Common myeloid progenitor, CD34-positive (primary cell): ENCODE measurements at regions of chr14 and their contacts with region 1.

Region 1: DNA sequence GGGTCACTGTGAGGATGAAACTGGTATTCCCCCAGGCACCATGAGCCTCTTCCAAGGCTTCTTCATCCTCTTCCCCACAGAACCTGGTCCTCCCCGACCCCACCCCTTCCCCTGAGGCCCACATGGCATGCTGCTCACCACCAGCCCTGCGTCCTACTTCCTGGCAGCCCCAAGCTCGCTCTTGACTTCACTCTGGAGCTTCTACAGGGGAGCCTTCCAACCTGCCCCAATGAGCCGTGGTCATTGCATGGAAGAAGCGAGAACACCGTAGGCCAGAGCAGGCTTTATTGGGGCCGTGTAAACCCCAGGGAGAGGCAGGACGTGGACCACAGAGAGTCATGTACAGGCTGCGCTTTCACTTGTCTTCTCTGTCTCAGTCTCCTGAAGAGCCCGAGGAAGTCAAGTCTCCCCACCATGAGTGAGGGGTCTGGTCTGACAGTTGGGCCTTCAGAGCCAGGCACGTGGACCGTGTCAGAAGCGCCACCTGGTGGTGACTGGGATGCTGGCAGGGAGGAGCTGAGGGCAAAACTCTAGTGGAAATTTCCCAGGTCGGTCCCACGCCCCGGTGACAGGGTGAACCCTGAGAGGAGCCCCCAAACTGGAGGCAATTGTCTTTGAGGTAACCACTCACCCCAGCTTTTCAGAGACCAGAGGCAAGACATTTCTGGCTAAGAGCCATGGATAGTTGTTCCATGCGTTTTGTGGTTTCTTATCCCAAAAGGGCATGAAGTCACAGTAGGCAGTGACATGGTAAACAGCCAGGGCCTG is 17.5 kb downstream of the RPS6KL1 start:
- DNase-seq: peak; percentile 66 to 78 (median 74)
- H3K4me3 ChIP-seq: no peak overlapping the region
- H3K27ac ChIP-seq: no peak overlapping the region
- H3K4me1 ChIP-seq: peaks cover 0 to 23% (median 17%) of the 10 kb centered on the region in 4 experiments
- H3K27me3 ChIP-seq: no peaks in the 10 kb centered on the region

Region 2: GRCh38 chr14:74712499-74713394 is 192.8 kb before region 1 on chr14 and contains the starts of genes AREL1 and FCF1:
- CTCF ChIA-PET with region 1: no interaction called
- POLR2A ChIA-PET with region 1: no interaction called
- DNase-seq: peak; percentile 93 to 94 (median 94)
- H3K4me3 ChIP-seq: peak within 1 kb of the TSS; percentile 82 to 99 (median 91)
- H3K27ac ChIP-seq: peak within 1 kb of the TSS; percentile 92 to 96
- H3K4me1 ChIP-seq: peaks cover 10 to 19% (median 18%) of the 10 kb centered on the region in 4 experiments
- H3K27me3 ChIP-seq: no peaks in the 10 kb centered on the region

Region 3: DNA sequence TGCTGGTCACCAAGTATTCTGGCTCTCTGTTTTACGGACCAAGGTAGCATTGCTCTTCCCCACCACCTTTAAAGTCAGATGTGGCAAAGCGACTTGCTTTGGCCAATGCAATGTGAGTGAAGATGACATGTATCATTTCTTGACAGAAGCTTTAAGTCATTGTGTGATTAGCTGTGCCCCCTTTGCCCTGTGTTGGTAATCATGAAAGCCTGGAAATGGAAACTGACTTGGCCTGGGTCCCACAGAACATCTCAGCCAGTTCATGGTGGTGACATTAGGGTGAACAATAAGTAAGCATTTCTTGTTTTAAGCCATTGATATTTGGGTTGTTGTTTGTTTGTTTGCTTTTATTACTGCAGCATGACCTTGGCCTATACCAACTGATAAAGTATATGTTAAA is 158.3 kb before region 1 on chr14:
- CTCF ChIA-PET with region 1: no interaction called
- POLR2A ChIA-PET with region 1: no interaction called
- DNase-seq: no peak
- H3K4me3 ChIP-seq: no peak overlapping the region
- H3K27ac ChIP-seq: no peak overlapping the region
- H3K4me1 ChIP-seq: no peaks in the 10 kb centered on the region
- H3K27me3 ChIP-seq: no peaks in the 10 kb centered on the region

Region 4: GRCh38 chr14:74867673-74868072 is 37.9 kb before region 1 on chr14:
- CTCF ChIA-PET with region 1: interaction called, 498 read pairs
- POLR2A ChIA-PET with region 1: interaction called, 8 read pairs
- DNase-seq: peak; percentile 48 to 90 (median 87)
- H3K4me3 ChIP-seq: peak overlapping the region in 1 of 7 experiments; percentile 6
- H3K27ac ChIP-seq: peak overlapping the region in 1 of 2 experiments; percentile 17
- H3K4me1 ChIP-seq: peaks cover 19 to 32% (median 27%) of the 10 kb centered on the region in 4 experiments
- H3K27me3 ChIP-seq: no peaks in the 10 kb centered on the region

Region 5: GRCh38 chr14:74881431-74882361 is 23.9 kb before region 1 on chr14 and contains the start of gene DLST:
- CTCF ChIA-PET with region 1: interaction called, 103 read pairs
- POLR2A ChIA-PET with region 1: interaction called, 7 read pairs
- DNase-seq: peak; percentile 83 to 89 (median 88)
- H3K4me3 ChIP-seq: peak within 1 kb of the TSS; percentile 83 to 99 (median 96)
- H3K27ac ChIP-seq: peak within 1 kb of the TSS; percentile 86 to 88
- H3K4me1 ChIP-seq: peaks cover 14 to 41% (median 33%) of the 10 kb centered on the region in 4 experiments
- H3K27me3 ChIP-seq: no peaks in the 10 kb centered on the region

Region 6: GRCh38 chr14:74893614-74894091 is 11.9 kb before region 1 on chr14:
- CTCF ChIA-PET with region 1: interaction called, 145 read pairs
- POLR2A ChIA-PET with region 1: interaction called, 4 read pairs
- DNase-seq: peak in 2 of 3 donors; percentile 62 to 64
- H3K4me3 ChIP-seq: no peak overlapping the region
- H3K27ac ChIP-seq: peak overlapping the region in 1 of 2 experiments; percentile 16
- H3K4me1 ChIP-seq: peaks cover 0 to 29% (median 26%) of the 10 kb centered on the region in 4 experiments
- H3K27me3 ChIP-seq: no peaks in the 10 kb centered on the region

Region 7: DNA sequence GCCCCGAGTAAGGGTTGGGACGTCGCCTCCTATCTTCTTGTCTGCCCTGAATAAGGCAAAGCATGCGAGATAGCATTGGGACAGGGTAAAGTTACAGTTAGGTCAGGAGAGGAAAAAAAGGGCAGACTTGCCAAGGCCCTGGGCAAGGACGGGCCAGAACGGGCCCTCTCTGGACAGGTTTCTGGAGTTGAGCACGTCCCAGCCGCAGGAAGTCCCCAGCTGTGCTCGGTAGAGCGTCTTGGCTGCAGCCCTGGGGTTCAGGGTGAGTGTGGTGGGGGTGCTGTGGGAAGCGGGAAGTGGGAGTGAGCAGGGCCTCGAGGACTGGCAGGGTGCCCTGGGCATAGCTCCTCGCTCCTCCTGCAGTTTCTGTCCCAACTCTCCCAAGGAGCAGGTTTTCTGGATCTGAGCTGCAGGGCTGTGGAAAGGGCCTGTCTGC is 12.1 kb after region 1 on chr14:
- CTCF ChIA-PET with region 1: interaction called, 18 read pairs
- POLR2A ChIA-PET with region 1: no interaction called
- DNase-seq: no peak
- H3K4me3 ChIP-seq: no peak overlapping the region
- H3K27ac ChIP-seq: no peak overlapping the region
- H3K4me1 ChIP-seq: peaks cover 0 to 5% (median 0%) of the 10 kb centered on the region in 4 experiments
- H3K27me3 ChIP-seq: no peaks in the 10 kb centered on the region

Region 8: DNA sequence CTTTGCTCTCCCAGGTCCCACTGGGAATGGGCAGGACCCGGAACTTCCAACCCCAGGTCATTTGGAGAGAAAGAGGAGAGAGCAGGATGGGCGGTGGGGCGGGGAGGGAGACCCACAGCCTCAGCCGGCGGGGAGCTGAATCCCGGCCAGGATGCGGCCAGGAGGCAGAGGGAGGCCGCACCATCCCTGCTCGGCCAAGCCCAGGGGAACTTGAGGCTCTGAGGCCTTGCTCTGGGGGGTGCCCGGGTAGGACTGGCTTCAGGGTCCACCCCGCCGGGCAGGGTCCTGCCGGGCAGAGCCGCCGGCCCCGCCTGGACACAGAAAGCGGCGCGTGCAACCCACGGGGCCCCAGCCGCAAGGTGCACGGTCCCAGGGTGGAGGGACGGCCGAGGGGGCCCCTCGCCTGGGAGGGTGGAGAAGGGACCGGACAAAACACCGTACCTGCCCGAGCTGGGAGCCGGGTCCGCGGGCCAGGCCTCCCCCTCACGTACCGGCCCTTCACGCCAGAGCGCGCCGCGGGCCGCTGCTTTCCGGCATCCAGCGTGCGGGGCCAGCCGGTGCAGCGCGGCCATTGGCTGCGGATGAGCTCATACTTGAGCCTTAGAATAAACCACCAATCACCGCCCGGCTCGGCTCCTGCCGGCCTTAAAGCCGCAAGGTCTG is 17.3 kb after region 1 on chr14 and contains the start of gene RPS6KL1:
- CTCF ChIA-PET with region 1: interaction called, 18 read pairs
- POLR2A ChIA-PET with region 1: no interaction called
- DNase-seq: peak; percentile 81 to 89 (median 87)
- H3K4me3 ChIP-seq: peak within 1 kb of the TSS; percentile 4 to 74 (median 66)
- H3K27ac ChIP-seq: no peak within 1 kb of the TSS
- H3K4me1 ChIP-seq: peaks cover 0 to 6% (median 3%) of the 10 kb centered on the region in 4 experiments
- H3K27me3 ChIP-seq: no peaks in the 10 kb centered on the region